H1 (cell line): ENCODE measurements at regions of chr9 and their contacts with region 1.

Region 1: GRCh38 chr9:34675048-34675714 is 12.7 kb upstream of the CCL27 start:
- DNase-seq: peak in 1 of 2 experiments; percentile 92
- H3K4me3 ChIP-seq: no peak overlapping the region
- H3K27ac ChIP-seq: no peak overlapping the region
- H3K4me1 ChIP-seq: 0 out of 7 replicates have a peak, but pooled peaks cover 0 to 2% (median under 1%) of the 10 kb centered on the region in 4 experiments
- H3K27me3 ChIP-seq: no peaks in the 10 kb centered on the region
- CTCF ChIP-seq: peak; percentile 92 to 100 (median 99)
- EP300 ChIP-seq: peak in 1 of 2 experiments; percentile 48; a peak in 1 of 3 replicates
- POLR2A ChIP-seq: no peak
- RAD21 ChIP-seq: peak; percentile 92 to 93

Region 2: GRCh38 chr9:34591248-34591916 is 83.8 kb before region 1 on chr9:
- CTCF ChIA-PET with region 1: no interaction called
- POLR2A ChIA-PET with region 1: no interaction called
- DNase-seq: peak in 1 of 2 experiments; percentile 98
- H3K4me3 ChIP-seq: peak overlapping the region in 2 of 4 experiments; percentile 51 to 74; a peak in 4 of 8 replicates
- H3K27ac ChIP-seq: no peak overlapping the region
- H3K4me1 ChIP-seq: peaks cover 4 to 30% (median 16%) of the 10 kb centered on the region in 4 experiments
- H3K27me3 ChIP-seq: peaks cover 67 to 80% (median 75%) of the 10 kb centered on the region in 4 experiments
- CTCF ChIP-seq: peak; percentile 92 to 98 (median 96)
- EP300 ChIP-seq: no peak
- POLR2A ChIP-seq: no peak
- RAD21 ChIP-seq: peak; percentile 91 to 93

Region 3: GRCh38 chr9:34686231-34686630 is 11.1 kb after region 1 on chr9:
- CTCF ChIA-PET with region 1: interaction called, 39 read pairs
- POLR2A ChIA-PET with region 1: interaction called, 3 read pairs
- DNase-seq: no peak
- H3K4me3 ChIP-seq: no peak overlapping the region
- H3K27ac ChIP-seq: no peak overlapping the region
- H3K4me1 ChIP-seq: peaks cover 0 to 3% (median 1%) of the 10 kb centered on the region in 4 experiments; a peak in 2 of 7 replicates
- H3K27me3 ChIP-seq: no peaks in the 10 kb centered on the region
- CTCF ChIP-seq: no peak
- EP300 ChIP-seq: no peak
- POLR2A ChIP-seq: no peak
- RAD21 ChIP-seq: no peak

Region 4: DNA sequence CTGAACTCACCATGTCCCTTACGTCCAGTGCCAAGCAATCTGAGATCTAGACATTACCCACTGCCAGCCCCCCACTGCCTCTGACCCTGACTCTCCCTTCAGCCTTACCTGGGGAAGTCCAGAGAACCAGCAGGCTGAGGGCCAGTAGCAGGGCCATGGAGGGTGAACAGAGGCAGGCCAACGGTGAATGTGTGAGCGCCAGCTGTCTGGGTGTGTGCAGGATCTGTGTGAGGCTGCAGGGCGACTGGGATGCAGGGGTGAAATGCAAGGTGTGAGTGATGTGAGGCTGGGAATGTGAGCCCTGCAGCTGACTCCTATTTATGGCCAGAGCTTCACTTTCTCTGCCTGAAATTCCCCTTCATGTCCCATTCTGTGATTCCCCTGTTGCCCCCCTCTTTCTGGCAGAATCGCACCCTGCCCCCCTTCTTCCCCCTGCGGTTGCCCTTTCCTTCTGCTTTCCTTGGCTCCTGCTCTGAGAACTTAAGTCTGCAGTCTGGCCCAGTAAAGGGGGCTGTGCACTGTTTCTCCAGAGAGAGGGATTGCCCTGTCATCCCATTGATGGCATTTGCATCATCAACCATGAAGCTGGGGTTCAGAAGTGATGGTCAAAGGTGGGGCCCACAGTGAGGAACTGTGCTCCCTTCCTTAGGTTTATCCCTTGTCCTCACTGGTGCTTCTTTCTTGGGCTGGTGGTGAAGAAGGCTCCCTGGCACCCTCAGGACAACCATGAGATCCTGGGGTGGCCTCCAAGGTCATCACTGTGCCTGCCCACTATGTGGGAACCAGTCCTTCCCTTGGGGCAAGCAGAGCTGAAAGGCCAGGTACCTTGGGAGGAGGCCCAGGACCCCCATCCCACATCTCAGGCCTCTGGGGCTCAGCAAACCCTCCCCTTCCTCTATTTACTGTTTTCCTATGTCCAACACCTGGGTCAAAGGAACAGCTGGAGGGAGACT is 16.1 kb after region 1 on chr9 and contains the start of gene CCL19:
- CTCF ChIA-PET with region 1: interaction called, 108 read pairs
- POLR2A ChIA-PET with region 1: no interaction called
- DNase-seq: no peak
- H3K4me3 ChIP-seq: no peak within 1 kb of the TSS
- H3K27ac ChIP-seq: no peak within 1 kb of the TSS
- H3K4me1 ChIP-seq: peaks cover 0 to 3% (median 1%) of the 10 kb centered on the region in 4 experiments; a peak in 2 of 7 replicates
- H3K27me3 ChIP-seq: no peaks in the 10 kb centered on the region
- CTCF ChIP-seq: no peak
- EP300 ChIP-seq: no peak
- POLR2A ChIP-seq: no peak
- RAD21 ChIP-seq: no peak
- total RNA-seq, gene CCL19: not detected in 2 replicates

Region 5: GRCh38 chr9:34701769-34702736 is 26.9 kb after region 1 on chr9:
- CTCF ChIA-PET with region 1: interaction called, 108 read pairs
- POLR2A ChIA-PET with region 1: interaction called, 3 read pairs
- DNase-seq: peak; percentile 21 to 92
- H3K4me3 ChIP-seq: peak overlapping the region; percentile 38 to 65 (median 45)
- H3K27ac ChIP-seq: no peak overlapping the region
- H3K4me1 ChIP-seq: peaks cover 0 to 5% (median 2%) of the 10 kb centered on the region in 4 experiments; a peak in 2 of 7 replicates
- H3K27me3 ChIP-seq: peaks cover 0 to 30% (median 18%) of the 10 kb centered on the region in 4 experiments; a peak in 6 of 7 replicates
- CTCF ChIP-seq: peak; percentile 97 to 98 (median 98)
- EP300 ChIP-seq: no peak
- POLR2A ChIP-seq: no peak
- RAD21 ChIP-seq: peak; percentile 77 to 81

Region 6: GRCh38 chr9:34710023-34710422 is 34.8 kb after region 1 on chr9 and contains the start of gene CCL21:
- CTCF ChIA-PET with region 1: interaction called, 15 read pairs
- POLR2A ChIA-PET with region 1: no interaction called
- DNase-seq: no peak
- H3K4me3 ChIP-seq: no peak within 1 kb of the TSS
- H3K27ac ChIP-seq: no peak within 1 kb of the TSS
- H3K4me1 ChIP-seq: no peaks in the 10 kb centered on the region
- H3K27me3 ChIP-seq: no peaks in the 10 kb centered on the region; a peak in 3 of 7 replicates
- CTCF ChIP-seq: no peak
- EP300 ChIP-seq: no peak
- POLR2A ChIP-seq: no peak
- RAD21 ChIP-seq: no peak
- total RNA-seq, gene CCL21: not detected in 2 replicates

Region 7: GRCh38 chr9:35042081-35042604 is 367.0 kb after region 1 on chr9:
- CTCF ChIA-PET with region 1: no interaction called
- POLR2A ChIA-PET with region 1: no interaction called
- DNase-seq: no peak
- H3K4me3 ChIP-seq: no peak overlapping the region
- H3K27ac ChIP-seq: no peak overlapping the region
- H3K4me1 ChIP-seq: peaks cover 0 to 2% (median 0%) of the 10 kb centered on the region in 4 experiments; a peak in 2 of 7 replicates
- H3K27me3 ChIP-seq: no peaks in the 10 kb centered on the region
- CTCF ChIP-seq: no peak
- EP300 ChIP-seq: no peak
- POLR2A ChIP-seq: no peak
- RAD21 ChIP-seq: no peak